Posterior vena cava (tissue), 2 donors: ENCODE measurements at regions of chr5 and their contacts with region 1.

Region 1: DNA sequence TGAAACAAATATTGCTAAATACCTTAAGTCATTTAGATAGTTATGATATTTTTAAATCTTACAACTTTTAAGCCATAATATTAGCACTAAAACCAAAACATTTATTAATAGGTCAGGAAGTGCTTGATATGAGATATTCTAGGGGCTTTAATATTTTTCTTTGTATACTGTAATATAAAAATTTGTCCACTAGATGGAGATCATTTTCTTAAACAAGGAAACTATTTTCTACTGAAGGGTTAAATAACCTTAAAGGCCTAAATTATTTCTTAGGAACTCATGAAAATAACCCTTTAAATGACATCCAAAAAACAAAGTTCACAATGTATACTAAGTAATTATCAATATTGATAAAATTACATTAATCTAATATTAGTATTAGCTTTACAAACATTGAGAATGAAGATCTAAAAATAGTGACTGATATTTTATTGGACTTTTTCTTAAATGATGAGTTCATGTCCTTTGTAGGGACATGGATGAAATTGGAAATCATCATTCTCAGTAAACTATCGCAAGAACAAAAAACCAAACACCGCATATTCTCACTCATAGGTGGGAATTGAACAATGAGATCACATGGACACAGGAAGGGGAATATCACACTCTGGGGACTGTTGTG is 635.7 kb downstream of the RAB3C start:
- DNase-seq: no peak

Region 2: DNA sequence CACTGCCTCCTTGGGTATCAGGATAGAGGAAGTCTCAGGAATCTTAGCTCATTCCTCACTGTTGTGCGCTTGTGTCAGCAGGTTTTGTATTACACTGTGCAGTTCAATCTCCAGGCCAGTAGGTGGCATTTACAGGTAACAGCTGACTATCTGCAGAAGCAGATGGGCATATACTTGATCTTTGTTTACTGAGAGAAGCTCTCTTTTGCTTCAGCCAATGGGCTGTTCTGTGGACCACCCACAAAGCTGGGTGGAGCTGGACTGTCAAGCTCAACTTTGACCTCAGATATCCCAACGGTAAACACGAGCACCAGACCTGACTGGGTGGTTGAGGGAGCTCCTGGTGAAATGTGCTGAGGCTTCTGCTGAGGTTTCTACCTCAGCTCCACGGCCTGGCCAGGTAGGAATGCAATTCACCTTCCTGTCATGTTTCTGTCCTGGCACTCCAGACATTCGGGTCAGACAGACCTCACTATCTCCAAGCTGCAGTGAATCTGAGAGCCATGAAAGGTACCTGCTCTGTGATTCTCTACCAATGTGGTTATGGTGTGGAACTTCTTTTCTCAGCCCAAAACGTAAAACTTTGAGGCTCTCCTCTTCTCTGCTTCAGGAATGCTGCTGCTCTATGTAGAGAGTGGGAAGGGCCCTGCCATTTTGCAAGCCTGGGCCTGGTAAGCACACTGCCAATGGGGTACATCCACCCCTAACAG is 1568.0 kb before region 1 on chr5:
- intact Hi-C with region 1: loop called in 1 of 2 experiments (anchors 10 kb)
- DNase-seq: no peak

Region 3: GRCh38 chr5:60551250-60551649 is 1332.7 kb after region 1 on chr5:
- intact Hi-C with region 1: no loop called
- DNase-seq: no peak